Naive thymus-derived CD4-positive, alpha-beta T cell (primary cell): ENCODE measurements at regions of chr5 and their contacts with region 1.

Region 1: DNA sequence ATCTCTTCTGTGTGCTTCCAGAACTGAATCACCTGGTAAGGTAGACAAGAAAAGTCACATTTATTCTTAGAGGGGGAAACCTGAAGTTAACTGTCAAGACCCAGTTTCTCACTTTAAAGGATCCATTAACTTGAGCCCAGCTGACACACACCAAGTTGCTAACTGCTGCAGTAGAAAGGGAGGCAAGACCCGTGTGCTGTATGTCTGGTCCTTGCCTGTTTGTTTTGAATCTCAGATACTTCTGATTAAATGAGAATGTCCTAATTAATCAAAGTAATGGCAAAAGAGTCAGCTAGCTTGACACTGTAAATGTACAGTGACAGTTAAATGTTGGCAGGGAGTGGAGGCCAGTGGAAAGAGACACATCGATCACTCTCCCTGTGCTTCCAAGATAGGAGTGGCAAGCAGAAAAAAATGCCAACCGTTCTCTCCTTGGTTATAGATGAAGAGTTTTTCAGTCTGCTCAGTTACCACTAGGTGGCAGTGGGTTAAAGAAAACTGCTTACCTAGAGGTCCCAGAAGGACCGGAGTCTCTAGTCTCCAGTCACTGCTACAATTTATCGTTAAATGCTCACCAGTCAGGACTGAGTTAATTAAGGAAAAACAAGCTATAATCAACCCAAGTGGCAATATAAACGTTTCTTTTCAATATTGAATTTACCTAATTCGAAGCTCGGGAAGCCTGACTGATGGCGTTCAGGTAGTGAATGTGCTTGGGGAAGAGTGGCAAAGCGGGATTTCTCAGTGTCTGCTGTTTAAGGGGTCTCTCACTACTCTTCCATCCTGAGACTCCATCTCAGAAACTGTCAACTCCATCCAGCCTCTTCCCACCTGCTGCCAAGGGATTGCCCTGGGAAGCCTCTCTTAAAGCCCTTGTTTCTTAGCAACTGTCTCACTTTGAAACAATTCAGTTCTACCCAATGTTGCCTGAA is 18.4 kb downstream of the LSM11 start:
- DNase-seq: peak in 6 of 9 donors; percentile 12 to 44 (median 34)
- ATAC-seq: peak; percentile 88
- H3K4me3 ChIP-seq: no peak overlapping the region
- H3K4me3 Mint-ChIP-seq: no peak overlapping the region
- H3K27ac ChIP-seq: no peak overlapping the region
- H3K27ac Mint-ChIP-seq: no peak overlapping the region
- H3K4me1 ChIP-seq: no peaks in the 10 kb centered on the region
- H3K4me1 Mint-ChIP-seq: peaks cover 0 to 5% (median 0%) of the 10 kb centered on the region in 7 donors
- H3K27me3 ChIP-seq: no peaks in the 10 kb centered on the region
- H3K27me3 Mint-ChIP-seq: peaks cover 0 to 6% (median 0%) of the 10 kb centered on the region in 5 donors

Region 2: GRCh38 chr5:156835905-156836304 is 926.1 kb before region 1 on chr5:
- CTCF ChIA-PET with region 1: no interaction called
- POLR2A ChIA-PET with region 1: no interaction called
- intact Hi-C with region 1: no loop called
- DNase-seq: no peak
- ATAC-seq: no peak
- H3K4me3 ChIP-seq: no peak overlapping the region
- H3K4me3 Mint-ChIP-seq: no peak overlapping the region
- H3K27ac ChIP-seq: no peak overlapping the region
- H3K27ac Mint-ChIP-seq: no peak overlapping the region
- H3K4me1 ChIP-seq: no peaks in the 10 kb centered on the region
- H3K4me1 Mint-ChIP-seq: peaks cover 0 to 9% (median 0%) of the 10 kb centered on the region in 7 donors
- H3K27me3 ChIP-seq: no peaks in the 10 kb centered on the region
- H3K27me3 Mint-ChIP-seq: no peaks in the 10 kb centered on the region

Region 3: GRCh38 chr5:157748760-157749461 is 13.0 kb before region 1 on chr5:
- CTCF ChIA-PET with region 1: interaction called, 10 read pairs
- POLR2A ChIA-PET with region 1: interaction called, 3 read pairs
- intact Hi-C with region 1: no loop called
- DNase-seq: no peak
- ATAC-seq: no peak
- H3K4me3 ChIP-seq: no peak overlapping the region
- H3K4me3 Mint-ChIP-seq: no peak overlapping the region
- H3K27ac ChIP-seq: no peak overlapping the region
- H3K27ac Mint-ChIP-seq: peak overlapping the region in 1 of 9 donors; percentile 59
- H3K4me1 ChIP-seq: peaks cover 8% of the 10 kb centered on the region in 2 donors
- H3K4me1 Mint-ChIP-seq: peaks cover 8 to 32% (median 17%) of the 10 kb centered on the region in 7 donors
- H3K27me3 ChIP-seq: no peaks in the 10 kb centered on the region
- H3K27me3 Mint-ChIP-seq: no peaks in the 10 kb centered on the region

Region 4: GRCh38 chr5:157808043-157808442 is 46.1 kb after region 1 on chr5:
- CTCF ChIA-PET with region 1: no interaction called
- POLR2A ChIA-PET with region 1: no interaction called
- intact Hi-C with region 1: no loop called
- DNase-seq: no peak
- ATAC-seq: no peak
- H3K4me3 ChIP-seq: no peak overlapping the region
- H3K4me3 Mint-ChIP-seq: no peak overlapping the region
- H3K27ac ChIP-seq: no peak overlapping the region
- H3K27ac Mint-ChIP-seq: no peak overlapping the region
- H3K4me1 ChIP-seq: no peaks in the 10 kb centered on the region
- H3K4me1 Mint-ChIP-seq: peaks cover 0 to 4% (median 0%) of the 10 kb centered on the region in 7 donors
- H3K27me3 ChIP-seq: no peaks in the 10 kb centered on the region
- H3K27me3 Mint-ChIP-seq: no peaks in the 10 kb centered on the region

Region 5: GRCh38 chr5:157948738-157949410 is 186.9 kb after region 1 on chr5:
- CTCF ChIA-PET with region 1: interaction called, 8 read pairs
- POLR2A ChIA-PET with region 1: no interaction called
- intact Hi-C with region 1: loop called (anchors 1 kb)
- DNase-seq: peak; percentile 44 to 78 (median 69)
- ATAC-seq: peak; percentile 97
- H3K4me3 ChIP-seq: no peak overlapping the region
- H3K4me3 Mint-ChIP-seq: peak overlapping the region in 4 of 10 donors; percentile 1 to 44 (median 4)
- H3K27ac ChIP-seq: no peak overlapping the region
- H3K27ac Mint-ChIP-seq: no peak overlapping the region
- H3K4me1 ChIP-seq: no peaks in the 10 kb centered on the region
- H3K4me1 Mint-ChIP-seq: peaks cover 5 to 10% (median 6%) of the 10 kb centered on the region in 7 donors
- H3K27me3 ChIP-seq: no peaks in the 10 kb centered on the region
- H3K27me3 Mint-ChIP-seq: peaks cover 5 to 27% (median 9%) of the 10 kb centered on the region in 5 donors

Region 6: GRCh38 chr5:157994906-157995519 is 233.1 kb after region 1 on chr5:
- CTCF ChIA-PET with region 1: interaction called, 3 read pairs
- POLR2A ChIA-PET with region 1: no interaction called
- intact Hi-C with region 1: loop called (anchors 1 to 5 kb)
- DNase-seq: peak; percentile 5 to 52 (median 31)
- ATAC-seq: peak; percentile 84
- H3K4me3 ChIP-seq: no peak overlapping the region
- H3K4me3 Mint-ChIP-seq: peak overlapping the region in 9 of 10 donors; percentile 29 to 77 (median 61)
- H3K27ac ChIP-seq: no peak overlapping the region
- H3K27ac Mint-ChIP-seq: no peak overlapping the region
- H3K4me1 ChIP-seq: peaks cover 14 to 16% of the 10 kb centered on the region in 2 donors
- H3K4me1 Mint-ChIP-seq: peaks cover 8 to 20% (median 12%) of the 10 kb centered on the region in 7 donors
- H3K27me3 ChIP-seq: peaks cover 0 to 3% of the 10 kb centered on the region in 2 donors
- H3K27me3 Mint-ChIP-seq: peaks cover 13 to 56% (median 20%) of the 10 kb centered on the region in 5 donors